MCF 10A (cell line): ENCODE measurements at regions of chr3 and their contacts with region 1.

Region 1: DNA sequence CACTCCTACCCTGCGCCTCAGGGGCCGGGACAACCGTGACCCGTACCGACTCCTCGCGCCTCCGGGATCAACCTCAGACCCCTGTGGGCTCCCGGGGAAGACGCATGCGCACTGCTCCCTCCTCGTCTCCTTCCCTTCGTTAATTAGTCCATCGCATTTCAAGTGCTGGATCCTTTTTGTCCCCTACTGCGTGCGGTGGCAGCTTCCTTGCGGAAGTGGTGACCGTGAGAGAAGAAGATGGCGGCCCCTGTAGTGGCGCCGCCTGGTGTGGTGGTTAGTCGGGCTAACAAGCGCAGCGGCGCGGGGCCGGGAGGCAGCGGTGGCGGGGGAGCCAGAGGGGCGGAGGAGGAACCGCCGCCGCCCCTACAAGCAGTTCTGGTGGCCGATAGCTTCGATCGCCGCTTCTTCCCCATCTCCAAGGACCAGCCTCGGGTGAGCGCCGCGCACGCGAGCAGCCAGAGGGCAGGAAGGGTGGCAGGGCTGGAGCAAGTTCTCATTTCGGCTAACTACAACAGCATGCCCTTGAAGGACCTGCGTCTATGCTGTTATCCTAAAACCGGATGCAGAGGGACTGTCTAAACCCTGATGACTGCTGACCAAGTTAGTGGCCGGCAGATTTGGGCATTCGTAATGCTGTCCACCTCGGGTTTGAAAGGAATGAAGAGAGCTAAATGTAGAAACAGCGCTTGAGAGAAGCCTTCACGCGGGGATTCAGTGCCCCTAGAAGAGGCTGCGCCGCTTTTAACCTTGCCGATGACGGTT is at the start of gene EIF2B5:
- DNase-seq: peak; percentile 93
- H3K4me3 Mint-ChIP-seq: peak within 1 kb of the TSS; percentile 99
- H3K27ac Mint-ChIP-seq: peak within 1 kb of the TSS; percentile 83
- H3K4me1 Mint-ChIP-seq: peaks cover 21% of the 10 kb centered on the region
- H3K27me3 Mint-ChIP-seq: no peaks in the 10 kb centered on the region
- CTCF ChIP-seq: peak; percentile 22
- total RNA-seq, gene EIF2B5: 33.8 and 36.1 TPM in 2 replicates

Region 2: GRCh38 chr3:183884427-183885296 is 250.7 kb before region 1 on chr3 and contains the start of gene PARL:
- CTCF ChIA-PET with region 1: interaction called, 5 read pairs
- POLR2A ChIA-PET with region 1: interaction called, 21 read pairs
- intact Hi-C with region 1: no loop called
- DNase-seq: peak; percentile 92
- H3K4me3 Mint-ChIP-seq: peak within 1 kb of the TSS; percentile 93
- H3K27ac Mint-ChIP-seq: peak within 1 kb of the TSS; percentile 88
- H3K4me1 Mint-ChIP-seq: peaks cover 13% of the 10 kb centered on the region
- H3K27me3 Mint-ChIP-seq: no peaks in the 10 kb centered on the region
- CTCF ChIP-seq: peak; percentile 91
- total RNA-seq, gene PARL: 73.5 and 88.0 TPM in 2 replicates

Region 3: DNA sequence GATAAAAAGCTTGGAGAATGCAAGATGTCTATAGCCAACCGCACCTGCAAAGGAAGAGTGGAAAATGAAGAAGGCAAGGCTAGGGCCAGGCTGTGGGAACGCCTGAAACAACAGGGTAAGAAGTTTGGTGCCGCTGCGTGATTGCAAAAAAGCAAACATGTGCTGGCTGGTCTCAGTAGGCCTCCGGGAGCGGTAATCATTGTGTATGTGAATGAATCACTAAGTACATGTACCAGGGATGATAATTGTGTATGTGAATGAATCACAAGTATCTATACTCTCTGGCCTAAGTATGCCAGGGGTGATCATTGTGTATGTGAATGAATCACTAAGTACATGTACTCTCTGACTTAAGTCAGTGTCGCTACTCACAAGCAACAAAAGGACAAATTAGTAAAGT is 210.4 kb before region 1 on chr3:
- CTCF ChIA-PET with region 1: no interaction called
- POLR2A ChIA-PET with region 1: interaction called, 10 read pairs
- intact Hi-C with region 1: no loop called
- DNase-seq: peak; percentile 93
- H3K4me3 Mint-ChIP-seq: peak overlapping the region; percentile 38
- H3K27ac Mint-ChIP-seq: peak overlapping the region; percentile 13
- H3K4me1 Mint-ChIP-seq: peaks cover 12% of the 10 kb centered on the region
- H3K27me3 Mint-ChIP-seq: no peaks in the 10 kb centered on the region
- CTCF ChIP-seq: no peak

Region 4: DNA sequence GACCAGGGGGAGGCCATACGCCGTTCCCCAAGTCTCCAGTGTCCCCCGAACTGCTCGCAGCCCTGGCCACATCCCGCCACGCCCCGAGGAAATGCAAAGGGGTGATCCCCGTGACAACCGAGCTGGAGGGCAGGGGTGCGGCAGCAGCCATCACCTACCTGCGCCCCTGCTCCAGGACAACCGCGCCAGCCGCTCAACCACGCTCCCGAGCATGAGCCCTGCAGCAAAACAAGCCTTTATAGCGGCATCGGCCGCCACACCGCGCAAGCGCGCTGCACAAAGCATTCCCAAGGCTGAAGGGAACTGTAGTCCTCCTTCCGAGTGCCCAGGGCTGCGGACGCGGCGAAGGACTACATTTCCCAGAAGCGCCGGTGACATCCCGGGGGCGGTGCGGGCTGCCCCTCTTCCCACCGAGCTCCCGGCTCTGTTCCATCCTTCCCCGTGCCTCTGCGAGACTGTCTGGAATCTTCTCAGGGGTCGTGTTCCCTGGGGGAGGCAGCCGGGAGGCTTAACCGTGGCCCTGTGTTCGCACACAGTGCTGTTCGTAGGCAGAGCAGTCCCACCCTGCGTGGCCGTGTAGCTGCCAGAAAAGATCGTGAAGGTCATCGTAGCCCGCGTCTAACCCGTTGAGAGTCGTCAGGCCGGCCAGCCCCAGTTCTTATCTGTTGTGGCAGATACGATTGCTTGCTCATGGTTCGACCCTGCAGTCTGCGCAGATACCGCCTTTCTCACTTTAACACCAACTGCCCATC is 117.5 kb before region 1 on chr3 and contains the start of gene ABCC5:
- CTCF ChIA-PET with region 1: interaction called, 4 read pairs
- POLR2A ChIA-PET with region 1: interaction called, 12 read pairs
- intact Hi-C with region 1: no loop called
- DNase-seq: peak; percentile 90
- H3K4me3 Mint-ChIP-seq: peak within 1 kb of the TSS; percentile 99
- H3K27ac Mint-ChIP-seq: peak within 1 kb of the TSS; percentile 71
- H3K4me1 Mint-ChIP-seq: peaks cover 30% of the 10 kb centered on the region
- H3K27me3 Mint-ChIP-seq: peaks cover 12% of the 10 kb centered on the region
- CTCF ChIP-seq: peak; percentile 28
- total RNA-seq, gene ABCC5: 16.5 and 17.9 TPM in 2 replicates

Region 5: GRCh38 chr3:184154885-184155643 is 19.7 kb after region 1 on chr3 and contains the start of gene DVL3:
- CTCF ChIA-PET with region 1: interaction called, 6 read pairs
- POLR2A ChIA-PET with region 1: interaction called, 59 read pairs
- intact Hi-C with region 1: no loop called
- DNase-seq: peak; percentile 60
- H3K4me3 Mint-ChIP-seq: peak within 1 kb of the TSS; percentile 97
- H3K27ac Mint-ChIP-seq: peak within 1 kb of the TSS; percentile 93
- H3K4me1 Mint-ChIP-seq: peaks cover 13% of the 10 kb centered on the region
- H3K27me3 Mint-ChIP-seq: no peaks in the 10 kb centered on the region
- CTCF ChIP-seq: no peak
- total RNA-seq, gene DVL3: 73.4 and 74.5 TPM in 2 replicates

Region 6: DNA sequence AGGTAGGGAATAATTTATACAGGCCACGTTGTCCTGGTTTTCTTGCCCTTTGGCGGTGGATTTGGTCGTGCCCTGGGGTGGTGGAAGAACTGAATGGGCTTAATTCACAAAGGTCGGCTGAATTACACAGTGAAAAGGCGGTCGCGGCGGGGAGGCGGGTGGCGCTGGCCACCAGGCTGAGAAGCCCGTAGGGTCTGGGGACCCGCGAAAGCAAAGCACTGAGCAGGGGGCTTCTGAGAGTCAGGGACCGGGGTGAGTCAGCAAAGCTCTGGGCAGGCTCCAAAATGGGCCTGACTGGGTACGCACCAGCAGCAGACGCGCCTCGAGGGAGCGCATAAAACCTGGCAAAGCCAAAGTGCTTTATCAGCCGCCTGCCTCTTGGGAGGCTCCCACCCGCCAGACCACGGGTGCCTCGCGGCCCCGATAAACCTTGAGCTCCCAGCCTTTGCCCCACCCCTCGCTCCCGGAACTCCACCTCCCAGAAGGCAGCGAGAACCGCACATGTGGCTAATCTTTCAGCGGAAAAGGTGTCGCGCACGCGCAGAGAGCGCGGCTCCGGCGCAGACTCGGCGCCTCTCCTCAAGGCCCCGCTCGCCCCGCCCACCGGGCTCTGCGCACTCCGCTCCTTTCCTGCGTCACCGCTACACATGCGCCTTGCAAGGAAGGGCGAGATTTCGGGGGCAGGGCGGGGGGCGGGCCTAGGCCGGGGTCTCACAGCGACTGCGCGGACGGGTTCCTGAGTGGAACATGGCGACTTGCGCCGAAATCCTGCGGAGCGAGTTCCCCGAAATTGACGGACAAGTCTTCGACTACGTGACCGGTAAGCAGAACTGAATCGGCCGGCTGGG is 50.4 kb after region 1 on chr3 and contains the start of gene ABCF3:
- CTCF ChIA-PET with region 1: no interaction called
- POLR2A ChIA-PET with region 1: interaction called, 10 read pairs
- intact Hi-C with region 1: loop called (anchors 5 kb)
- DNase-seq: peak; percentile 98
- H3K4me3 Mint-ChIP-seq: peak within 1 kb of the TSS; percentile 95
- H3K27ac Mint-ChIP-seq: peak within 1 kb of the TSS; percentile 93
- H3K4me1 Mint-ChIP-seq: peaks cover 19% of the 10 kb centered on the region
- H3K27me3 Mint-ChIP-seq: no peaks in the 10 kb centered on the region
- CTCF ChIP-seq: no peak
- total RNA-seq, gene ABCF3: 62.7 and 73.9 TPM in 2 replicates